ENCODE measurements at regions of chr21 and their contacts with region 1.

Region 1: GRCh38 chr21:29232601-29233546 is 65.8 kb upstream of the BACH1 start:
- DNase-seq: peak; percentile 48
- H3K4me3 Mint-ChIP-seq: no peak overlapping the region
- H3K27ac Mint-ChIP-seq: peak overlapping the region; percentile 39
- H3K4me1 Mint-ChIP-seq: peaks cover 36% of the 10 kb centered on the region
- H3K27me3 Mint-ChIP-seq: peaks cover 25% of the 10 kb centered on the region

Region 2: GRCh38 chr21:29078869-29079767 is 153.8 kb before region 1 on chr21:
- intact Hi-C with region 1: loop called (anchors 5 kb)
- DNase-seq: peak; percentile 67
- H3K4me3 Mint-ChIP-seq: peak overlapping the region; percentile 88
- H3K27ac Mint-ChIP-seq: peak overlapping the region; percentile 77
- H3K4me1 Mint-ChIP-seq: peaks cover 34% of the 10 kb centered on the region
- H3K27me3 Mint-ChIP-seq: no peaks in the 10 kb centered on the region

Region 3: DNA sequence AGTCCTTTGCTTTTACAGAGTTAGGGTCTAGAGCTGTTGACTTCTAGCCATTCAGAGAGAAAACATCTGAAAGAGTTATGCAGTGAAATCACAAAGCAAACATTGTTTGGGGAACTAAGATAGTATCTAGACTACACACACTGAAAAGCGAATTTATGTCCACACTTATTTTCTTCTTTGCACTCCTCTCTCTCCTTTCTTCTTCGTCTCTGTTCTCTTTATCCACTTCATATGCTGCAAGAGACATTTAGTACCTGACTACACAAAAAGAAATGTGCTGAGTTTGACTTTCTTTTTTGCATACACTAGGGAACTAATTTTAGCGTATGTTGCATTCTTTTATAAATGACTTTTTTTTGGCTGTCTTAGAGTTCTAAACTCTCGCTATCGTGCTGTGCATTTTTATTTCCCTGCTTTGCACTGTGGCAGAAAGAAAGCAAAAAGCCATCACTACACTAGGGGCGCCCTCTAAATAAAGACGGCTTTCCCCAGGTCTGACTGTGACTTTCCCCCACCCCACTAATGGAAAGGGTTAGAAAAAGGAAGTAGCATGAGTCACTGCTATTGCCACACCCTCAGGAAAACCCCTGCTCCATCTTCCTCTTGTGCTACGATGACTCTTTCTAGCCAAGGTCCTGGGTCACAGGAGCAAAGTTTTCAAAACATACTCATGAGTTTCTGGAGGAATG is 36.7 kb before region 1 on chr21:
- intact Hi-C with region 1: loop called (anchors 1 kb)
- DNase-seq: peak; percentile 92
- H3K4me3 Mint-ChIP-seq: peak overlapping the region; percentile 91
- H3K27ac Mint-ChIP-seq: peak overlapping the region; percentile 94
- H3K4me1 Mint-ChIP-seq: peaks cover 37% of the 10 kb centered on the region
- H3K27me3 Mint-ChIP-seq: no peaks in the 10 kb centered on the region

Region 4: DNA sequence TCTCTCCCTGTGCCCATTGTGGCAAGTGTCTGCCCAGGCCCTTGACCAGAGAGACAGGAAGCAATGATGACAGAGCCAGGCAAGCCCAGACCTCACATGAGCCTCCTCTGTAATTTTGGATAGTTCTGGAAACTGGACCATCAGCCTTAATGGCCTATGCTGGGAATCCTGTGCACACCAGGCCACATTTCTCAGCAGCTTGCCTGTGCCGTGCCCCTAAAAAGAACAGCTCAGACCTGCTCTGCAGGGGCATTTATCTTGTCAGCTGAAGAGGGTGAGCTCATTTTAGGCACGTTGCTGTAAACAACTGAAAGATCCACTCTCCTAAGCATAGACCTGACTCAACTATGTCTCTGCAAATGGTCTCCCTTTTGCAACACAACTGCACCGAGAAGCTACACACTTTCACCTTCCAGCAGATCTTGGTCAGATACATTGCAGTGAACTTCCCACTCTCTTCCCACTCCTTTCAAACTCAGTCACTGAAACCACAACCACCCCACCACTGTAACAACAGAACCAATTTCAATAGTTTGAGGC is 12.3 kb after region 1 on chr21:
- intact Hi-C with region 1: loop called (anchors 1 kb)
- DNase-seq: no peak
- H3K4me3 Mint-ChIP-seq: no peak overlapping the region
- H3K27ac Mint-ChIP-seq: peak overlapping the region; percentile 72
- H3K4me1 Mint-ChIP-seq: peaks cover 11% of the 10 kb centered on the region
- H3K27me3 Mint-ChIP-seq: peaks cover 25% of the 10 kb centered on the region

Measured in activated CD4-positive, alpha-beta T cell treated with anti-CD3 and anti-CD28 coated beads, Interleukin-2, amount 10 ng/mL, durations not matched to agents 24 days and 14 days (primary cell).